H1 (cell line): ENCODE measurements at regions of chr17 and their contacts with region 1.

Region 1: DNA sequence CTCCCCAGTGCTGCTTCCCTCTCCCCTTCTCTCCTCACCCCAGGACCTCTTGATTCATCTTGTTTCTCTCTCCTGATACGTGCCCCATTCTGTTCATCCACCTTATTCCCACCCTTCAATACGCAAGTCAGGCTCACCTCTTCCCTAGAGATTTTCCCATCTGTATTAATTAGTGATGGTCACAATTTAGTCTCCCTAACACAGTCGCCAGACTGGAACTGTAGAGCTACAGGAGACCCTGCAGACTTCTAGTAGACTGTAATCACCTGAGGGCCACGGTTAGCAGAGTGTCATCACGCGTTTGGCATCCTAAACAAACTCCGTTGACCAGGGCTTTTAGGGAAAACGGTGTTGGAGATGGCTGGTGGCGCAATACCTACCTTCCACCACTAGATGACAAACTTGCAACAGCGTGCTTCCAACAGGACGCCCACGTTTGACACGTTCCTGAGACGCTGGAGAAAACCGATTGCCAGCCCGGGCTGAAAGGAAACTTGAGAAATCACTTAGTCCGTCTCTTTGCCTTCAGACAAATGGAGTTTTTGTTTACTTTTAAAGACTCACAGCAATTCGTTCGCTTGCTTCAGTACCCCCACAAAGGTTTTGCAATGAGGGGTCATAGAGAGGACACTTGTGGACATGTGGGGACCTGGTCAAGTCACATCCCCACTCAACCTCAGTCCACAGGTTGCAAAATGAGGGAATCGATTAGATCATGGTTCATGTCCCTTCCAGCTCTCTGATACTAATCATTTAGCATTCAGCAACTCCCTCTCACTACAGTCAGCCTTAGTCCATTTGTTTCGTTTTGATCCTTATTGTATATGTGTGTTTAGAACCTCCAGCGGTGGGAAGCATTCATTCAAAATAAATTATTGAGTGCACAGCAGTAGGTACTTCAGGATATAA is 20.6 kb downstream of the MYL4 start:
- DNase-seq: peak; percentile 69 to 83
- H3K4me3 ChIP-seq: peak overlapping the region in 1 of 4 experiments; percentile 17; a peak in 1 of 8 replicates
- H3K27ac ChIP-seq: no peak overlapping the region
- H3K4me1 ChIP-seq: peaks cover 0 to 3% (median 3%) of the 10 kb centered on the region in 4 experiments; a peak in 3 of 7 replicates
- H3K27me3 ChIP-seq: 0 out of 7 replicates have a peak, but pooled peaks cover 0 to 1% (median 0%) of the 10 kb centered on the region in 4 experiments
- CTCF ChIP-seq: peak; percentile 96 to 100 (median 96)
- EP300 ChIP-seq: no peak
- POLR2A ChIP-seq: no peak
- RAD21 ChIP-seq: peak; percentile 99 to 100

Region 2: GRCh38 chr17:47131761-47132160 is 98.0 kb before region 1 on chr17:
- CTCF ChIA-PET with region 1: no interaction called
- POLR2A ChIA-PET with region 1: no interaction called
- DNase-seq: no peak
- H3K4me3 ChIP-seq: no peak overlapping the region
- H3K27ac ChIP-seq: no peak overlapping the region
- H3K4me1 ChIP-seq: no peaks in the 10 kb centered on the region
- H3K27me3 ChIP-seq: no peaks in the 10 kb centered on the region
- CTCF ChIP-seq: no peak
- EP300 ChIP-seq: no peak
- POLR2A ChIP-seq: no peak
- RAD21 ChIP-seq: no peak

Region 3: GRCh38 chr17:47208744-47209488 is 20.9 kb before region 1 on chr17 and contains the start of gene MYL4:
- CTCF ChIA-PET with region 1: interaction called, 10 read pairs
- POLR2A ChIA-PET with region 1: no interaction called
- DNase-seq: no peak
- H3K4me3 ChIP-seq: no peak within 1 kb of the TSS
- H3K27ac ChIP-seq: no peak within 1 kb of the TSS
- H3K4me1 ChIP-seq: peaks cover 0 to 3% (median 1%) of the 10 kb centered on the region in 4 experiments; a peak in 2 of 7 replicates
- H3K27me3 ChIP-seq: peaks cover 0 to under 1% (median 0%) of the 10 kb centered on the region in 4 experiments; a peak in 2 of 7 replicates
- CTCF ChIP-seq: no peak
- EP300 ChIP-seq: no peak
- POLR2A ChIP-seq: no peak
- RAD21 ChIP-seq: no peak
- total RNA-seq, gene MYL4: not detected in 2 replicates

Region 4: GRCh38 chr17:47239619-47240374 is 10.0 kb after region 1 on chr17:
- CTCF ChIA-PET with region 1: interaction called, 16 read pairs
- POLR2A ChIA-PET with region 1: interaction called, 4 read pairs
- DNase-seq: no peak
- H3K4me3 ChIP-seq: no peak overlapping the region
- H3K27ac ChIP-seq: no peak overlapping the region
- H3K4me1 ChIP-seq: peaks cover 0 to 3% (median 0%) of the 10 kb centered on the region in 4 experiments; a peak in 1 of 7 replicates
- H3K27me3 ChIP-seq: peaks cover 0 to 2% (median 0%) of the 10 kb centered on the region in 4 experiments; a peak in 1 of 7 replicates
- CTCF ChIP-seq: no peak
- EP300 ChIP-seq: no peak
- POLR2A ChIP-seq: no peak
- RAD21 ChIP-seq: no peak

Region 5: GRCh38 chr17:47315451-47316266 is 85.9 kb after region 1 on chr17:
- CTCF ChIA-PET with region 1: interaction called, 105 read pairs
- POLR2A ChIA-PET with region 1: interaction called, 3 read pairs
- DNase-seq: no peak
- H3K4me3 ChIP-seq: no peak overlapping the region
- H3K27ac ChIP-seq: no peak overlapping the region
- H3K4me1 ChIP-seq: peaks cover 0 to 2% (median under 1%) of the 10 kb centered on the region in 4 experiments; a peak in 3 of 7 replicates
- H3K27me3 ChIP-seq: no peaks in the 10 kb centered on the region
- CTCF ChIP-seq: peak in 2 of 3 experiments; percentile 82 to 83; a peak in 3 of 4 replicates
- EP300 ChIP-seq: no peak
- POLR2A ChIP-seq: no peak
- RAD21 ChIP-seq: peak; percentile 95 to 98

Region 6: DNA sequence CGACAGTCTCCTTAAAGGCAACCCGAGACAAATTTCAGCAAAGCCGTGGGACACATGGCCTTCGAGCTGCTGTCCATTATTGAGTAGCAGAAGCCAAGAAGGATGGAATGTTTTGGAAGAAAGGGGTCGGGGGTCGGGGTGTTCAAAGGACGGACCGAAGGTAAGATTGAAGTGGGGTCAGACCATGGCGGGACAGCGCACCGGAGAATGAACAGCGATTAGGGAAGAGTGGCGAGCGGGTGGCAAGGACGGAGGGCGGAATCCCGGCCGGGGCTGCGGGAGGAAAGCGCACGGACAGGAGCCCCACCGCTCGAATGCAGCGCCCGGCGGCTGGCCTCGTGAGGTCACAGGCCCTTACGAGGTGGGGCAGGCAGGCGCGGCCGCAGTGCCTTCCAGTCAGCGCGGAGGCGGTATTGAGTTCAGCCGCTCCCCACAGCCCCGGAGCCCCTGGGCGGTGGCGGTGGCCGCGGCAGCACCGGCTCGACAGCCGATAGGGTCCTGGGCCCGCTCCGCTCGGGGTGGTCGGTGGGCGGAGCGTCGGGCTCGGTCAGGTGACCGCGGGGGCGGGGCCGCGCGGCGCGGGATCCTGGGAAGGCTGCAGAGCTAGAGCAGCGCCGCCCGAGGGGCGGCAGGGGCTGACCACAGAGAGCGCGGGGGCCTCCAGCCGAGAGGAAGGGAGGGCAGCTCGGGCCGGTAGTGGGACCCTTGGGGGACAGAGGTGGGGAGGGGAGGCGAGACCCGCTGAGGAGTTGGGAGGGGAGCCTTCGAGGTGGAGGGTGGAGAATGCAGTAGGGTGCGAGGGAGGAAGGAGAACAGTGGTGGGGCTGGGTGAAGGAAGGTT is 93.8 kb after region 1 on chr17 and contains the start of gene EFCAB13:
- CTCF ChIA-PET with region 1: interaction called, 13 read pairs
- POLR2A ChIA-PET with region 1: interaction called, 3 read pairs
- DNase-seq: peak; percentile 85 to 94
- H3K4me3 ChIP-seq: peak within 1 kb of the TSS; percentile 65 to 71 (median 67)
- H3K27ac ChIP-seq: peak within 1 kb of the TSS; percentile 41; the same call in 1 of the 2 replicates
- H3K4me1 ChIP-seq: peaks cover 0 to 2% (median 0%) of the 10 kb centered on the region in 4 experiments; a peak in 2 of 7 replicates
- H3K27me3 ChIP-seq: peaks cover 0 to 13% (median 4%) of the 10 kb centered on the region in 4 experiments; a peak in 4 of 7 replicates
- CTCF ChIP-seq: peak in 2 of 3 experiments; percentile 25 to 46; a peak in 2 of 4 replicates
- EP300 ChIP-seq: no peak
- POLR2A ChIP-seq: peak; percentile 84
- RAD21 ChIP-seq: peak; percentile 5 to 15; a peak in 2 of 4 replicates
- total RNA-seq, gene EFCAB13: 1.3 and 2.0 TPM in 2 replicates